T-cell (primary cell): ENCODE measurements at regions of chr2 and their contacts with region 1.

Region 1: GRCh38 chr2:174465327-174465726 is 21.5 kb downstream of the GPR155 start:
- DNase-seq: no peak
- ATAC-seq: no peak
- H3K4me3 ChIP-seq: no peak overlapping the region
- H3K4me3 Mint-ChIP-seq: no peak overlapping the region
- H3K27ac ChIP-seq: no peak overlapping the region
- H3K27ac Mint-ChIP-seq: peak overlapping the region in 1 of 2 donors; percentile 27
- H3K4me1 ChIP-seq: no peaks in the 10 kb centered on the region
- H3K4me1 Mint-ChIP-seq: no peaks in the 10 kb centered on the region
- H3K27me3 ChIP-seq: no peaks in the 10 kb centered on the region
- H3K27me3 Mint-ChIP-seq: no peaks in the 10 kb centered on the region

Region 2: DNA sequence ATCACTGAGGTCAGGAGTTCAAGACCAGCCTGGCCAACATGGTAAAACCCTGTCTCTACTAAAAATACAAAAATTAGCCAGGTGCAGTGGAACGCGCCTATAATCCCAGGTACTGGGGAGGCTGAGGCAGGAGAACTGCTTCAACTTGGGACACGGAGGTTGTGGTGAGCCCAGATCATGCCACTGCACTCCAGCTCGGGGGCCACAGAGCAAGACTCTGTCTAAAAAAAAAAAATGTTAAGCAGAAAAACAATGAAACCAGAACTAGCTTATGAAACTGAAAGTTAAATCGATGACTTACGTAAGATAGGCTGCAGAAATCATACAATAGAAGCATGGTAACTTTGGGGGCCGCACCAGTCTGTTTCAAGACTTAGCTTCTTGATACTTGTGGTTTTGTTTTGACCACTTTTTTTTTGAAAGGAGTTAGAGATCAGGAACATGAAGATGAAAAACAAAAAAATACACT is 27.7 kb after region 1 on chr2:
- CTCF ChIA-PET with region 1: interaction called, 3 to 28 read pairs
- POLR2A ChIA-PET with region 1: interaction called, 3 to 7 read pairs
- DNase-seq: peak; percentile 20 to 88 (median 69)
- ATAC-seq: peak; percentile 86 to 93 (median 86)
- H3K4me3 ChIP-seq: peak overlapping the region; percentile 25 to 43
- H3K4me3 Mint-ChIP-seq: peak overlapping the region; percentile 80 to 84 (median 82)
- H3K27ac ChIP-seq: peak overlapping the region; percentile 95
- H3K27ac Mint-ChIP-seq: peak overlapping the region; percentile 99
- H3K4me1 ChIP-seq: peaks cover 43 to 48% of the 10 kb centered on the region in 2 experiments
- H3K4me1 Mint-ChIP-seq: peaks cover 79 to 83% (median 83%) of the 10 kb centered on the region in 3 donors
- H3K27me3 ChIP-seq: no peaks in the 10 kb centered on the region
- H3K27me3 Mint-ChIP-seq: no peaks in the 10 kb centered on the region

Region 3: GRCh38 chr2:174546581-174547506 is 81.5 kb after region 1 on chr2:
- CTCF ChIA-PET with region 1: interaction called, 7 to 25 read pairs
- POLR2A ChIA-PET with region 1: no interaction called
- DNase-seq: peak in 26 of 35 experiments; percentile 3 to 54 (median 21)
- ATAC-seq: peak in 3 of 4 experiments; percentile 46 to 67 (median 47)
- H3K4me3 ChIP-seq: no peak overlapping the region
- H3K4me3 Mint-ChIP-seq: peak overlapping the region in 1 of 3 donors; percentile 13
- H3K27ac ChIP-seq: no peak overlapping the region
- H3K27ac Mint-ChIP-seq: peak overlapping the region; percentile 5 to 61
- H3K4me1 ChIP-seq: peaks cover 0 to 4% of the 10 kb centered on the region in 2 experiments
- H3K4me1 Mint-ChIP-seq: peaks cover 6 to 19% (median 17%) of the 10 kb centered on the region in 3 donors
- H3K27me3 ChIP-seq: no peaks in the 10 kb centered on the region
- H3K27me3 Mint-ChIP-seq: no peaks in the 10 kb centered on the region

Region 4: GRCh38 chr2:174577967-174578589 is 112.8 kb after region 1 on chr2:
- CTCF ChIA-PET with region 1: interaction called, 7 to 18 read pairs
- POLR2A ChIA-PET with region 1: no interaction called
- DNase-seq: peak in 34 of 35 experiments; percentile 35 to 82 (median 62)
- ATAC-seq: peak; percentile 67 to 78 (median 73)
- H3K4me3 ChIP-seq: no peak overlapping the region
- H3K4me3 Mint-ChIP-seq: no peak overlapping the region
- H3K27ac ChIP-seq: peak overlapping the region; percentile 16
- H3K27ac Mint-ChIP-seq: peak overlapping the region; percentile 59 to 68
- H3K4me1 ChIP-seq: peaks cover 3 to 48% of the 10 kb centered on the region in 2 experiments
- H3K4me1 Mint-ChIP-seq: peaks cover 76 to 83% (median 83%) of the 10 kb centered on the region in 3 donors
- H3K27me3 ChIP-seq: no peaks in the 10 kb centered on the region
- H3K27me3 Mint-ChIP-seq: no peaks in the 10 kb centered on the region

Region 5: DNA sequence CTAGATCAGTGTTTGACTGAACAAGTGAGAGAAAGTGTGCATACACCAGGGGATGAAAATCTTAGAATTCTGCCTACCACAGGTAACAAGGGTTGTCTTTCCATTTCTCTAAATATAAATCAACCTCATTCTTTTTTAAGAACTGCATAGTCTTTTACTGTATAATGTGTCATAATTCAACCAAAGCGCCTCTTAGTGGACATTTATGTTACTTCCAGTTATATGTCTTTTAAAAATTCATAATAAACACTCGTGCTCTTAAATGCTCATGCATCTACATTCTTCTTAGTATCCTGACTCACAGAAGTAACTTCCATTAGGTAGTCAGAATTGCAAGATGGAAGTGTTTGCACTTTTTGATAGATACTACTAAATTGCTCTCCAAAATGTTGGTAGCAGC is 222.8 kb after region 1 on chr2:
- CTCF ChIA-PET with region 1: interaction called, 17 to 73 read pairs
- POLR2A ChIA-PET with region 1: interaction called in 1 of 2 experiments, 3 read pairs
- DNase-seq: peak in 1 of 35 experiments; percentile 68
- ATAC-seq: peak; percentile 50 to 62 (median 60)
- H3K4me3 ChIP-seq: no peak overlapping the region
- H3K4me3 Mint-ChIP-seq: no peak overlapping the region
- H3K27ac ChIP-seq: no peak overlapping the region
- H3K27ac Mint-ChIP-seq: peak overlapping the region; percentile 56 to 73
- H3K4me1 ChIP-seq: peaks cover 0 to 5% of the 10 kb centered on the region in 2 experiments
- H3K4me1 Mint-ChIP-seq: peaks cover 24 to 29% (median 26%) of the 10 kb centered on the region in 3 donors
- H3K27me3 ChIP-seq: peaks cover 0 to 8% of the 10 kb centered on the region in 2 experiments
- H3K27me3 Mint-ChIP-seq: no peaks in the 10 kb centered on the region